Activated CD8-positive, alpha-beta memory T cell treated with anti-CD3 and anti-CD28 coated beads, Interleukin-2, amount 10 ng/mL, durations not matched to agents 7 days and 5 days (primary cell): ENCODE measurements at regions of chr6 and their contacts with region 1.

Region 1: DNA sequence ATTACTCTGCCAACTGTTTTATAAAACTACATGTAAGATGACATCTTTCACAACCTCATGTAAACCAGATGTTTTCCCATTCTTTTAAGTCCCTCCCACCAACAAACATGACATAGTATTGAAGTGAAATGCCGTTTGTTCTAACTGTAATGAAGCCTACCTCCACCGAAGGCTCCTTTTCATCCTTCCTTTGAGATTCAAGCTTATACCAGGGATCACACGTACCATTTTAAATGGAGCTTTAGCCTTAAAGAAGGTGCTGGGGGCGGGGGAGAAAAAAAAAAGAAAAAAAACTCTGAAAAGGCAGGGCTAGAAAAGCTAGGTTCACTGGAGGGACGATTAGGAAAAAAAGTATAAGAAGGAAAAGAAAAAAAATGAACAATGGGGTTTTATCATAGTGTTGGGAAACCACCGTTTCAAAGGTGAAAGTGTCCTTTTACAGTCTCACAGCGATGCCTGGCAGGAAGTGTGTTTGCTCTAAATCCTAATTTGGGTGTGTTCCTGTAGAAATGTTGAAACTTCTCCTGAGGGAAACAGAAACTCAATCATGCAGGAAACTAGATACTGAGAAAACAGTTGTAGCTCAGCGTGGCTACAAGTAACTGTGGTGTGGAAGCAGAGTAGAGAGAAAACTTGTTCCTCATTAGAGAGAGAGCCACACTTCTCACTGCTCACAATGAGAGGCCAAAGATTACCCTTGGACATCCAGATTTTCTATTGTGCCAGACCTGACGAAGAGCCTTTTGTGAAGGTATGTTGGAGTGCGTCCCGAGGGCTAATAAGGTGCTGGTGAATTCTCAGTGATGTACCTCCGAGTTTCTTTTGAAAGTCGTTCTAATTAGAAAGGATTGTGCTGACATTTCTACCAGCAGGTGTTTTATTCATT is 37.6 kb upstream of the HINT3 start:
- DNase-seq: peak; percentile 73
- ATAC-seq: peak; percentile 94
- H3K4me3 Mint-ChIP-seq: peak overlapping the region; percentile 85
- H3K27ac Mint-ChIP-seq: peak overlapping the region; percentile 91
- H3K4me1 Mint-ChIP-seq: peaks cover 44% of the 10 kb centered on the region
- H3K27me3 Mint-ChIP-seq: no peaks in the 10 kb centered on the region

Region 2: GRCh38 chr6:125906158-125906998 is 12.5 kb before region 1 on chr6:
- CTCF ChIA-PET with region 1: interaction called, 39 read pairs
- DNase-seq: peak; percentile 54
- ATAC-seq: no peak
- H3K4me3 Mint-ChIP-seq: no peak overlapping the region
- H3K27ac Mint-ChIP-seq: no peak overlapping the region
- H3K4me1 Mint-ChIP-seq: peaks cover 56% of the 10 kb centered on the region
- H3K27me3 Mint-ChIP-seq: no peaks in the 10 kb centered on the region

Region 3: DNA sequence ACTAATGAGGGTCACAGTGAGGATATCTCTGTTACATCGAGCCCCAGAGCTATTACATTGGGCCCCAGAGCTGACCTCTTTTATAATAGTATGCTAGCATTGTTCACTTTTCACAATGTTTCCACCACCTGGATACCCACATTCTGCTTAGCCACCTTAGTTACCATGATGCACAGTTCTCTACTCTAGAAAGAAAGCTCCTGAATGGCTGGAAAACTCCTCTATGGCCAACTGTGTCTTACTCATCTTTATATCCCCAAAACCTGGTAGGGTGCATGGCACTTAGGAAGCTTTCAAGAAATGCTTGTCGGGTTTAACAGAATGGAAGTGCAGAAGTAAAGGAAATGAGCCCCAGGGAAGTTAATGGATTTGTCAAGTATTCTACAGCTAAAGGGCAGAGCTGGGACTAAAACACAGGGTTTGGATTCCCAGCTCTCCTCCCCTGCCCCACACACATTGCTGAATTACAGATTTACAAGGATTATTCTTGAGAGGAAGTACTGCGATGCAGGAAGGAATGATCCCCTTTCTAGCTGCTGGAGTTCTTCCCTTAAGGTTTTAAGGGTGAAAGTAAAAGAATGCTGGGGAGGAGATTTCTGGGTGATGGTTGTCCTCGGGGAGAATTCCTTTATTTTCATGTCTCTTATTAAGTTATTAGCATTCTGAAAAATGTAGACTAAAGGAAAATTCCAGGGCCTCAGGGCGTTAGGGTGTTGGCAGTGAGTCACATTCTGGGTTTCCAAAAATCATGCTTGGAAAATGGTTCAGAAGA is 21.5 kb after region 1 on chr6:
- CTCF ChIA-PET with region 1: no interaction called
- DNase-seq: no peak
- ATAC-seq: no peak
- H3K4me3 Mint-ChIP-seq: no peak overlapping the region
- H3K27ac Mint-ChIP-seq: no peak overlapping the region
- H3K4me1 Mint-ChIP-seq: peaks cover 21% of the 10 kb centered on the region
- H3K27me3 Mint-ChIP-seq: peaks cover 13% of the 10 kb centered on the region

Region 4: GRCh38 chr6:125966569-125966968 is 47.6 kb after region 1 on chr6:
- CTCF ChIA-PET with region 1: no interaction called
- DNase-seq: no peak
- ATAC-seq: no peak
- H3K4me3 Mint-ChIP-seq: no peak overlapping the region
- H3K27ac Mint-ChIP-seq: no peak overlapping the region
- H3K4me1 Mint-ChIP-seq: peaks cover 3% of the 10 kb centered on the region
- H3K27me3 Mint-ChIP-seq: no peaks in the 10 kb centered on the region